Mammary epithelial cell (primary cell): ENCODE measurements at regions of chr20 and their contacts with region 1.

Region 1: DNA sequence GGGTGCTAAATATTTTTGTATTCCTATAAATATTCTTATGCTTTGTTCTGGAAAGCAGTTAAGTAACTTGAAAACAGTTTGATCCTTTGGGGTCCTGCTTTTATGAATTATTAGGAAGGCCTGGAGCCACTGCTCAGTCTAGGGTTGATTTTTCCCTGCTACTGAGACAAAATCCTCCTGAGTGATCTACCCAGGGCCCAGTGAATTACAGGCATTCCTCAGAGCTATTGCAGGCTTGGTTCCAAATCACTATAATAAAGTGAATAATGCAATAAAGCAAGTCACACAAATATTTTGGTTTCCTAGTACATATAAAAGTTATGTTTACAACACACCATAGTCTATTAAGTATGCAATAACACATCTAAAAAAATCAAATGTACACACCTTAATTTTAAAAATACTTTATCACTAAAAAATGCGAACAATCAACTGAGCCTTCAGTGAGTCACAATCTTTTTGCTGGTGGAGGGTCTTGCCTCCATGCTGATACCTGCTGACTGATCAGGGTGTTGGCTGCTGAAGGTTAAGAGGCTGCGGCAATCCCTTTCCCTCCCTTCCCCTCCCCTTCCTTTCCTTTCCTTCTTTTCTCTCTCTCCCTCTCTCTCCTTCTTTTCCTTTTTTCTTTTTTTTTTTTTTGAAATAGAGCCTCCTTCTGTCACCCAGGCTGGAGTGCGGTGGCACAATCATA is 43.0 kb downstream of the DNAAF9 start:
- DNase-seq: no peak
- H3K4me3 ChIP-seq: no peak overlapping the region
- H3K27ac ChIP-seq: no peak overlapping the region
- H3K4me1 ChIP-seq: no peaks in the 10 kb centered on the region
- H3K27me3 ChIP-seq: no peaks in the 10 kb centered on the region
- CTCF ChIP-seq: no peak

Region 2: DNA sequence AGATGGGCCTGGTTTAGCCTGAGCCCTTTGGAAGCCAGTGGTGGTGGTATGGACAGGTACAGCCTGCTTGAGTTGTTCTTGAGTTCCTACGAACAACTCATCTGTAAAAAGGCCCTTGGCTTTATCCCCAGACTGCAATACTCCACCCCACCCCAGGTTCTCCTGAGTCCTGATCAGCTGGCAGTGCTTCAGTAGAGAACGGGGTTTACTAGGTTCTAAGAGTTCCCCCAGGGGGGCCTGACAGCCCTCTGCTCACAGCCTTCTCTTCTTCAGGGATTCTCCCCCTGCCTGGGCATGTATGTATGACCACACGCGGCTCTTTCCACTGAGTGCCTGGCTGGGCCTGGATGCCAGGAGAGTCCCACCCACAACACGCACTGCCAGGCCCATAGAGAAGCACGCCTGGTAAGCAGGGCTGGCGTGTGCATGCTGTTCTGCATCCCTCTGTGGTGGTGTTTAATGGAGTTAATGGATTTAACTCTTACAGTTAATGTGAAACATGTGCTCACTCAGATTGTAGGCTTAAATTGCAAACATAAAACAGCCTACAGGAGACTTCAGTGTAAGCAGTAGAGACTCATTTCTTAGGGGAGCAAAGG is 81.1 kb before region 1 on chr20:
- CTCF ChIA-PET with region 1: no interaction called
- dilution Hi-C with region 1: no loop called
- in situ Hi-C with region 1: no loop called
- intact Hi-C with region 1: no loop called
- DNase-seq: no peak
- H3K4me3 ChIP-seq: no peak overlapping the region
- H3K27ac ChIP-seq: no peak overlapping the region
- H3K4me1 ChIP-seq: no peaks in the 10 kb centered on the region
- H3K27me3 ChIP-seq: no peaks in the 10 kb centered on the region
- CTCF ChIP-seq: no peak

Region 3: DNA sequence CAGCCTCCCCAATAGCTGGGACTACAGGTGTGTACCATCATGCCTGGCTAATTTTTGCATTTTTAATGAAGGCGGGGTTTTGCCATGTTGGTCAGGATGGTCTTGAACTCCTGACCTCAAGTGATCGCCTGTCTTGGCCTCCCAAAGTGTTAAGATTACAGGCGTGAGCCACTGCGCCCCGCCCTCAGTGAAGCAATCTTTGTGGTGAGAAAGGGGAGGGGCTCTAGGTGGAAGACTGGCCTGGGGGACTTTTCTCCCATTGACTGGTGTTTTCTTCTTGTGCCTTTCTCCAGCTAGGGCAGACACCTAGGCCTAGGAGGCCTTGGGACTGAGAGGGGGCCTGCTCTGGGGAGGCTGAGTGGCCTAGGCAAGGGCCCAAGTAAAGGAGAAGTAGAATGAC is 41.1 kb before region 1 on chr20:
- CTCF ChIA-PET with region 1: no interaction called
- dilution Hi-C with region 1: loop called (anchors 5 kb)
- in situ Hi-C with region 1: no loop called
- intact Hi-C with region 1: no loop called
- DNase-seq: peak; percentile 52
- H3K4me3 ChIP-seq: no peak overlapping the region
- H3K27ac ChIP-seq: no peak overlapping the region
- H3K4me1 ChIP-seq: peaks cover 7% of the 10 kb centered on the region
- H3K27me3 ChIP-seq: no peaks in the 10 kb centered on the region
- CTCF ChIP-seq: no peak

Region 4: DNA sequence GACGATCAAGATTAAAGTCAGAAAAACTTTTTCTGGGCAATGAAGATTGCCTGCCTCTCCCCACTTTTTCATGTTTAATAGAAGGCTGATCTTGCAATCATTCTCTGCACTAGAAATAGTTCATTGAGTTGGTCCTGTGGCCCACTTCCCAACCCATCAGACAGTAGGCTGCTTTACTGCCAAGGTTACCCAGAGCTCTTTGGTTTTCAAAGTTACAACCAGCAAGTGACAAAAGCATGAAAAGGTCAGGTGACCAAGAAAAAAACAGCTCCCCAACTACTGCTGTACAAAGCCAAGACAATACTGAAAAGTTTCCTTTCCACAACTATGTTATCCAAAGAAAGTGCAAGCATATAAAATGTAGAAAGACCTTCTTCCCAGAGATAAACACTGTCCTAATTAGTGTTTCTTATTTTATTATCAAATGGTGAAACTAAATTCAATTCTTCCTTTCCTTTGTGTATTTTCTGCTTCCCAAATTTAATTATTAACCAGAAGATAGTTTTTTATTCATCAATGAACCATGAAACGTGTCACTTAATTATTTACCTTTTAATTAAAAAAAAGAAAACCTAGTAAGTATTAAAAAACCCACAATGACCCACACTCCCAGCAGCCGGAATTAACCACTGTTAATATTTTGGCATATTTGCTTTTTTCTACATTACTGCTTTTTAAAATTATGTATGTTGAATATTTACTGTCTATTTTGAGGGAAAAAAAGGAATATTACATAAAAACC is 26.5 kb after region 1 on chr20:
- CTCF ChIA-PET with region 1: no interaction called
- dilution Hi-C with region 1: no loop called
- in situ Hi-C with region 1: no loop called
- intact Hi-C with region 1: no loop called
- DNase-seq: no peak
- H3K4me3 ChIP-seq: no peak overlapping the region
- H3K27ac ChIP-seq: no peak overlapping the region
- H3K4me1 ChIP-seq: peaks cover 5% of the 10 kb centered on the region
- H3K27me3 ChIP-seq: no peaks in the 10 kb centered on the region
- CTCF ChIP-seq: no peak

Region 5: DNA sequence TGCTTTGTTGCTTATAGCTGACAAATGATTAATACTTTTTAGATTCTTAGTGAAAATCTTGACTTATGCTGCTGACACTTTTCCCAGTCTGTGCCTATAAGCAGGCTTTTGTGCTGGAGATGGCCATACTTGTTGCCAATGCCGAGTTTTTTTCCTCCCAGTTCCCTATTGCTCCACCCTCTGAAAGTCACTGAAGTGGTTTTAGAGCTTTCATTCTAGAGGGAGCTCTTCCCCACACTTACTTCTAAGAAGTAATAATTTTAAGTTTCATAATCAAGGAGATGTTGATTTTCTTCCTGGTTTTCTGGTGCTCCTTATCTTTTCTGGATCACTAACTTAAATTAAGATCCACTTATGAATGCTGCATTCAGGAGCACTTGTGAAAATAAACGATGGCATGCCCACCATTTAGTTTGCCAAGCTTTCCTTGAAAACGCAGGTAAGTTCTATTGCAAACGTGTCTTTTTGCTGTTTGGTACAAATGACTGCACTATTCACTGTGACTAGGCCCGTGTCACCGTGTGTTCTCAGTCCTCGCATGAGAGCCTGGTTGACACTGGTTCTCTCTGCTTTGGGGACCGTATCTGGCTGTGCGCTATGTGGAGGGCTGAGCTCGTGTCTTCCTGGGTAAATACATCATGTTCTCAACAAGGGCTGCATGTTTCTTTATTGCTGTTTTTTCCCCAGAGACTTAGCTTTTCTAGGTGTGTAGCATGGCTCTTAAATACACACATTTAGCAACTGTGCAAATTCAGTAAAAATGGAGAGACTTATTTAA is 248.5 kb after region 1 on chr20:
- CTCF ChIA-PET with region 1: no interaction called
- dilution Hi-C with region 1: no loop called
- in situ Hi-C with region 1: no loop called
- intact Hi-C with region 1: no loop called
- DNase-seq: no peak
- H3K4me3 ChIP-seq: no peak overlapping the region
- H3K27ac ChIP-seq: no peak overlapping the region
- H3K4me1 ChIP-seq: peaks cover 10% of the 10 kb centered on the region
- H3K27me3 ChIP-seq: no peaks in the 10 kb centered on the region
- CTCF ChIP-seq: no peak